ENCODE measurements at regions of chr5 and their contacts with region 1.

Region 1: GRCh38 chr5:139458580-139459406 is 3.8 kb downstream of the ECSCR start:
- DNase-seq: no peak
- ATAC-seq: peak in 3 of 4 donors; percentile 41 to 58 (median 41)
- H3K4me3 ChIP-seq: no peak overlapping the region
- H3K27ac ChIP-seq: peak overlapping the region; percentile 59
- H3K4me1 ChIP-seq: no peaks in the 10 kb centered on the region
- H3K27me3 ChIP-seq: no peaks in the 10 kb centered on the region
- CTCF ChIP-seq: no peak

Region 2: GRCh38 chr5:138874771-138875551 is 583.8 kb before region 1 on chr5 and contains the start of gene LRRTM2:
- intact Hi-C with region 1: no loop called
- DNase-seq: no peak
- ATAC-seq: no peak
- H3K4me3 ChIP-seq: no peak within 1 kb of the TSS
- H3K27ac ChIP-seq: no peak within 1 kb of the TSS
- H3K4me1 ChIP-seq: peaks cover 38% of the 10 kb centered on the region
- H3K27me3 ChIP-seq: no peaks in the 10 kb centered on the region
- CTCF ChIP-seq: no peak
- total RNA-seq, gene LRRTM2: 0.19 to 0.28 (median 0.22) TPM in 3 of 4 donors, not detected in the other

Region 3: DNA sequence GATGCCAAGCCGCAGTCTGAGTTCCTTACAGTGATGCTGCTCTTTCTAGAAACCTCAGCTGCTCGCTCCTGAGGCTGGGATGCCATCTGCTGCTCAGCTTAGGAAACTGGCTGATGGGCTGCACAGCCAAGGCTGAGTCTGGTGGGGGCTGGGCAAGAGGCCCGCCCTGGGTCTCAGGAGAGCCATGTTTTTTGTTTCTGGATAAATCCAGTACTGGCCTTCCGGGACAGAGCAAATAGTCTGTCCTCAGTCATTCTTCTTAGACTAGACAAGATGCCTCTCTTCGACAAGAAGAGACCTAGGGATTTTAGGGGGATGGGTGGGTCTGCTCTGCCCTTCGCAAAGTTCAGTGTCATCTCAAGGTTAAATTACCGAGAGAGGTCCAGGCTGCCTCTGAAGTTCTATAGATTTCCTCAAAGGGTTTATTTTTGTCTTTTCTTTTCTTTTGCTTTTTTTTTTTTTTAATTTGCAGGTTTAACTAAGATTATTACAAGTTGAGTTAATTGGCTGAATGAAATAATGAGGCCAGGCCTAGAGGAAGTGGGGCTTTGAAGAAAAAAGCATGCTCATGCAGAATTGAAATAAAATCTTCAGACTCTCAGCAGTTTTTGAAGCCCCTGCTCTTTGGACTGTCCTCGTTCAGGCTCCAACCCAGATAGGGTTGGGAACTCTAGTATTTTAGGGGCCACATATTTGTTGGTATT is 195.9 kb before region 1 on chr5:
- intact Hi-C with region 1: no loop called
- DNase-seq: peak; percentile 87 to 93
- ATAC-seq: peak; percentile 99 to 100 (median 99)
- H3K4me3 ChIP-seq: no peak overlapping the region
- H3K27ac ChIP-seq: peak overlapping the region; percentile 5
- H3K4me1 ChIP-seq: peaks cover 12% of the 10 kb centered on the region
- H3K27me3 ChIP-seq: no peaks in the 10 kb centered on the region
- CTCF ChIP-seq: peak; percentile 90

Region 4: DNA sequence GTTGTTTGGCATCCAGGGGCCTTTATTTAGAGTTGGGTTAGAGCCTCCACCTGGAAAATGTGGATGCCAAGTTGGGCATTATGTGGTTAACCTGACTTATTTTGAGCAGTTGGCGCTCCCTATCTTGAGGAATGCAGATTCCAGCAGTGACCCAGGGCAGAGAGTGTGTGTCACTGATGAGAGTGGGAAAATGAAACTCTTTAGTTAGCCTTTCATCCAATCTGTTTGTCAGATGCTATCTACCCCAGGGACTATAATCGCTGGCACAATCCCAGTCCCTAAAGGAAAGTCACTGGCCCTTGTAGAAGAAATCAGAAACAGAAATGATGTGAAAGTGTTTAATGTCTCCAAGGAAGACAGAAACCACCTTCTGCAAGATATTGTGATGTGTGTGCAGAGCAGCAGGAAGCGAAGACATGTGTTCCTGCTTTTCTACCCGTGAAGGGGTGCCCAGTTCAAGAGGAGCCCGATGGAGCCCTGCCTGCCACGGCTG is 34.0 kb after region 1 on chr5:
- intact Hi-C with region 1: loop called in 1 of 2 experiments (anchors 5 kb)
- DNase-seq: no peak
- ATAC-seq: peak in 2 of 4 donors; percentile 40 to 43
- H3K4me3 ChIP-seq: no peak overlapping the region
- H3K27ac ChIP-seq: no peak overlapping the region
- H3K4me1 ChIP-seq: peaks cover 8% of the 10 kb centered on the region
- H3K27me3 ChIP-seq: no peaks in the 10 kb centered on the region
- CTCF ChIP-seq: no peak